K562 (cell line): ENCODE measurements at regions of chr3 and their contacts with region 1.

Region 1: DNA sequence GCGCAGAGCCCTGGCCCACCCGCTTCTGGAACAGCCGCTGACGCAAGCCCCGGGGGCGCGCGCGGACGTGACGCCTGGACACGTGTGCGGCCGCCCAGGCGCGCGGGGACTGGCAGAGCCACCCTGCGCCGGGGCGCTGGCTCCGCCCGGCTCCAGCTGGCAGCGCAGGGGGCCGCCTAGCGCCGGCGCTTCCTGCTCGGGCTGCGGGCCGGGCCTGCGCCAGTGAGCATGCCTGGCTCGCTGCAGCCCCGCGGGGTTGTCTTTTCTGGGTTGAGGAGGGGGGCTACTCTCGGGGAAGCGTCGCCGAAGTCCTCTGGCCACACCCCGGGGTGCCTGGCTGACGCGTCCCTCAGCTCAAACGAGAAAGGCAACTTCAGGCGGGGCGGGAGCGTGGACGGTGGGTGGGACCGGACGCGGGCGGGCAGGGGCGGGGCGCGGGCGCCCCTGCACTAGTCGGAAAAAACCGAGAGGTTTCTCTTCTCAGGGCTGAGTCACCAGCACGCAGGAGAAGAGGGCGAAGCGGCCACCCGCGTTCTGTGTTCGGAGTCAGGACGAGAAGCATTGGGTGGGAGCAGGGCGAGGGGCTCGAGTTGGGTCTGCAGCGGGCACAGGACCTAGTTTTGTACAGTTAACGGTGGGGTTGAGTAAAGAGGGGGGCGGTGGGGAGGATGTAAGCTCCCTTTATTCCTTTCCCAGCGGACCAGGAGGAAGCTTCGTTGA is at the start of gene SIAH2:
- DNase-seq: peak; percentile 89 to 94 (median 92)
- ATAC-seq: peak; percentile 83
- H3K4me3 ChIP-seq: peak within 1 kb of the TSS; percentile 72
- H3K27ac ChIP-seq: peak within 1 kb of the TSS; percentile 84
- H3K4me1 ChIP-seq: peaks cover 21 to 28% of the 10 kb centered on the region in 2 experiments; a peak in 4 of 5 replicates
- H3K27me3 ChIP-seq: no peaks in the 10 kb centered on the region
- CTCF ChIP-seq: no peak
- EP300 ChIP-seq: no peak
- POLR2A ChIP-seq: peak; percentile 87
- RAD21 ChIP-seq: no peak
- polyA plus RNA-seq, gene SIAH2: 4.8 to 7.5 TPM

Region 2: DNA sequence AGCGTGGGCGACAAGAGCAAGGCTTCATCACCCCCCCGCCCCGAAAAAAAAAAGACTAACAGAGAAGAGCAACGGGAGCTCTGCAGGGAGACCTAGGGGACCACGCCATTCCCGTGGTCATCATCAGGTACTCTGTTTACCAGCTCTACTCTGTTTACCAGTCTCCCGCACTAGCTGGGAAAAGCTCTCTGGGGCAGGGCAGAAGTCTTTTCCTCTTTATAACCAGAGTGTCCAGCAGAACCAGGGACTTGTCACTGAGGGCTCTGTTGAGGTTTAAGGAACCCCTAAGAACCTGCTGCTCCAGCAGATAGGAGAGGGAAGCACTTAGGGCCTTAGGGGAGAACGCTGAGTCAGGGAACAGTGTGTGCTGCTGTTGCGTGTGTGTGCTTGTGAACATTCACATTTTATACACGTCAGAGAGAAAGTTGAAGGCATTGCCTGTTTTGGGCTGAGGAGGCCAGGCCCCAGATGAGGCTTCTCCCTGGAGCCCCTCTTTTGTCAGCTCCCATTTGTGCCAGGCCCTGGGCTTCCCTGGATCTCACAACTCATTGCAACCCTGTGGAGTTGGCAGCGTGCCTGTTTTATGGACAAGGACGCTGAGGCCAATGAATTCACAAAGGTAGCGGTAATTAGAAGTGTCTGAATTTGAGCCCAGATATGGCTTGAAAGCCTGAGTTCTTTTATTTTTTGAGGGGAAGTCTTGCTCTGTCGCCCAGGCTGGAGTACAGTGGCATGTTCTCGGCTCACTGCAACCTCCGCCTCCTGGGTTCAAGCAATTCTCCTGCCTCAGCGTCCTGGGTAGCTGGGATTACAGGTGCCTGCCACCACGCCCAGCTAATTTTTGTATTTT is 35.4 kb before region 1 on chr3:
- CTCF ChIA-PET with region 1: no interaction called
- POLR2A ChIA-PET with region 1: interaction called, 9 read pairs
- in situ Hi-C with region 1: no loop called
- intact Hi-C with region 1: loop called (anchors 1 kb)
- DNase-seq: peak; percentile 77 to 92 (median 78)
- ATAC-seq: peak; percentile 87
- H3K4me3 ChIP-seq: no peak overlapping the region
- H3K27ac ChIP-seq: peak overlapping the region; percentile 94
- H3K4me1 ChIP-seq: peaks cover 40 to 63% of the 10 kb centered on the region in 2 experiments
- H3K27me3 ChIP-seq: no peaks in the 10 kb centered on the region
- CTCF ChIP-seq: no peak
- EP300 ChIP-seq: peak; percentile 73
- POLR2A ChIP-seq: 0 out of 2 replicates have a peak, but pooled peaks have one; percentile 47
- RAD21 ChIP-seq: peak in 1 of 2 experiments; percentile 27; a peak in 1 of 4 replicates

Region 3: DNA sequence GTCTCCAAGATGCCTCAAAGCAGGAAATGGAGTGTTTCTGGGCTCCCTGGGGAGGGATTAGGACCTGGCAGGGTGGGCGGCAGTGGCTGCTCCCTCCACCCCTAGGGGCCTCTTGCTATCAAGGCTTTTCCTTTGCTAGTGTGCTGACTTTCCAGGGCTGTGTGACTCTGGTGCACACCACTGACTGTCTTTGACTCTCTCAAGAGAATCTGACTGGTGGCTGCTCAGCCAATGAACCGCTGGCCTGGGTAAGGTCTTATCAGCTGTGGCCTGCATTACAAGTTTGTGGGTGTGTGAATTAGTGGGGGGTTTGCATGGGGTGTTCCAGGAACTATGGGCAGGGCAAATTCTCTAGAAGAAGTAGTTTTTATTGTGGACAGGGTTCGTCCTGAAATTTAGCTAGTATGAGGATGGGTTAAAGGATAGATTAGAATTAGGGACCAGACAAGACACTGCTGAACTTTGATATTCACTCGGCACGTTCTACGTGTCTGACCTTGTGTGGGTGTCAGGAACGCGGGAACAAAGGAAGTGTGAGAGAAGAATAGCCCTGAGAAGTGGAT is 29.8 kb before region 1 on chr3:
- CTCF ChIA-PET with region 1: no interaction called
- POLR2A ChIA-PET with region 1: interaction called, 9 read pairs
- in situ Hi-C with region 1: no loop called
- intact Hi-C with region 1: loop called (anchors 2 kb)
- DNase-seq: peak; percentile 88 to 97 (median 91)
- ATAC-seq: peak; percentile 91
- H3K4me3 ChIP-seq: no peak overlapping the region
- H3K27ac ChIP-seq: peak overlapping the region; percentile 76
- H3K4me1 ChIP-seq: peaks cover 19 to 70% of the 10 kb centered on the region in 2 experiments
- H3K27me3 ChIP-seq: no peaks in the 10 kb centered on the region
- CTCF ChIP-seq: peak in 2 of 3 experiments; percentile 25 to 31; a peak in 1 of 6 replicates
- EP300 ChIP-seq: peak; percentile 88; the same call in 1 of the 2 replicates
- POLR2A ChIP-seq: peak; percentile 66
- RAD21 ChIP-seq: 0 out of 4 replicates have a peak, but pooled peaks of 1 of the 2 experiments have one; percentile 5

Region 4: GRCh38 chr3:150775091-150775501 is 11.8 kb after region 1 on chr3:
- CTCF ChIA-PET with region 1: no interaction called
- POLR2A ChIA-PET with region 1: interaction called, 10 read pairs
- in situ Hi-C with region 1: no loop called
- intact Hi-C with region 1: no loop called
- DNase-seq: no peak
- ATAC-seq: no peak
- H3K4me3 ChIP-seq: no peak overlapping the region
- H3K27ac ChIP-seq: no peak overlapping the region
- H3K4me1 ChIP-seq: peaks cover 0 to 25% of the 10 kb centered on the region in 2 experiments; a peak in 3 of 5 replicates
- H3K27me3 ChIP-seq: no peaks in the 10 kb centered on the region; a peak in 1 of 5 replicates
- CTCF ChIP-seq: no peak
- EP300 ChIP-seq: no peak
- POLR2A ChIP-seq: no peak
- RAD21 ChIP-seq: no peak

Region 5: GRCh38 chr3:150972362-150973071 is 209.2 kb after region 1 on chr3 and contains the start of gene CLRN1:
- CTCF ChIA-PET with region 1: no interaction called
- POLR2A ChIA-PET with region 1: no interaction called
- in situ Hi-C with region 1: no loop called
- intact Hi-C with region 1: no loop called
- DNase-seq: no peak
- ATAC-seq: no peak
- H3K4me3 ChIP-seq: no peak within 1 kb of the TSS
- H3K27ac ChIP-seq: no peak within 1 kb of the TSS
- H3K4me1 ChIP-seq: no peaks in the 10 kb centered on the region
- H3K27me3 ChIP-seq: peaks cover 8% of the 10 kb centered on the region in 2 experiments; a peak in 4 of 5 replicates
- CTCF ChIP-seq: no peak
- EP300 ChIP-seq: no peak
- POLR2A ChIP-seq: no peak
- RAD21 ChIP-seq: no peak
- polyA plus RNA-seq, gene CLRN1: not detected

Region 6: DNA sequence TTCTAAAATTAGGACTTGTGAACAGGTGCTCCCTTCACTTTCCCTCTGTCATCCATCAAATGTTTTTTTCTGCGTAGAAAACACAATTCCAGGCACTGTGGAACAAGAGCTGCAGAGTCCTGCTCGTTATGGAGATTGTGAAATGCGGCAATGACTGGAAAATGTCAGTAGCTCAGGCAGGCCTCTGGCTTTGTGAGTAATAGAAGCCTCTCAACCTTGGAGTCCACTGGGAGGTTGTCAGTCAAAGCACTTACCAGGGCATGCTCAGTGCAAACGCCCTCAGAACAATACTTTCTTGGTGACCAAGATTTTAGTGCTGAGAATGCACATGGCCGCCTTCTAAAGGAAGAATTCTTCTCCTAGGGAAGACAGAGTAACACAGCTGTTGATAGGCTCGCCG is 295.5 kb after region 1 on chr3:
- CTCF ChIA-PET with region 1: no interaction called
- POLR2A ChIA-PET with region 1: no interaction called
- in situ Hi-C with region 1: no loop called
- intact Hi-C with region 1: no loop called
- DNase-seq: no peak
- ATAC-seq: no peak
- H3K4me3 ChIP-seq: no peak overlapping the region
- H3K27ac ChIP-seq: no peak overlapping the region
- H3K4me1 ChIP-seq: no peaks in the 10 kb centered on the region
- H3K27me3 ChIP-seq: peaks cover 2 to 8% of the 10 kb centered on the region in 2 experiments; a peak in 2 of 5 replicates
- CTCF ChIP-seq: no peak
- EP300 ChIP-seq: no peak
- POLR2A ChIP-seq: no peak
- RAD21 ChIP-seq: no peak

Region 7: GRCh38 chr3:152729906-152730305 is 1966.6 kb after region 1 on chr3:
- CTCF ChIA-PET with region 1: no interaction called
- POLR2A ChIA-PET with region 1: no interaction called
- in situ Hi-C with region 1: no loop called
- intact Hi-C with region 1: no loop called
- DNase-seq: no peak
- ATAC-seq: no peak
- H3K4me3 ChIP-seq: no peak overlapping the region
- H3K27ac ChIP-seq: no peak overlapping the region
- H3K4me1 ChIP-seq: no peaks in the 10 kb centered on the region
- H3K27me3 ChIP-seq: no peaks in the 10 kb centered on the region
- CTCF ChIP-seq: no peak
- EP300 ChIP-seq: no peak
- POLR2A ChIP-seq: no peak
- RAD21 ChIP-seq: no peak